Naive thymus-derived CD4-positive, alpha-beta T cell (primary cell): ENCODE measurements at regions of chr4 and their contacts with region 1.

Region 1: DNA sequence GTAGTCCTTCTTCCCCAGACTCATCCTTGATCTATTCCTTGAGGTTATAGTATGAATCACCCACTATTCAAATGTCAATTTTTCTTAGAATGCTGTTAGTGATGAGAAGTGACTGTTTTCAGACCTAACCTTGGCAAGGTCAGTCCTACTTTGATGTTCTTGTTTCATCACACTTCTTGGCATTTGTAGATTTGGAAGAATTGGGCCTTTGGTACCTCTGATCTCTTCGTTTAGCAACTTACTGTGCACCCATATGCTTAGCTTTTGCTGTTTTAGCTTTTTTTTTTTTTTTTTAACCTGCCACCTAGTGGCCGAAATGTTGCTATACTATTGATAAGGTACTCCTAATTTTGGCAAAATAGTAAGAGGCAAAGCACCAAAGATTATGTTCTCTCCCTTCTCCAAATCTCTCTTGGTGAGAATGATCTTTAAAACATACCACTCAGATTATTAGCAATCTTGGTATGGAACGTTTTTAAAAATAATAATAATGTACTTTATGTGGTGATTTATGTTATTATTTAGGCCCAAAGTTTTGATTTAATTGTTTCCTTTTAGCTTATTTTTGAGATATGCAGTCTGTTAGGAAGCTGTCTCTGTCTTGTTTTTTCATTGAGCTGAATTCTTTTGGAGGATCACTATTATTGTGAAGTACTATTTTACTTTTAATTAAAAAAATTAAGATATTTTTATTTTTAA is 16.6 kb downstream of the DCK start:
- DNase-seq: peak in 6 of 9 donors; percentile 23 to 54 (median 48)
- ATAC-seq: peak; percentile 83
- H3K4me3 ChIP-seq: no peak overlapping the region
- H3K4me3 Mint-ChIP-seq: peak overlapping the region in 3 of 10 donors; percentile 5 to 44 (median 29)
- H3K27ac ChIP-seq: no peak overlapping the region
- H3K27ac Mint-ChIP-seq: peak overlapping the region in 8 of 9 donors; percentile 26 to 65 (median 48)
- H3K4me1 ChIP-seq: peaks cover 9 to 10% of the 10 kb centered on the region in 2 donors
- H3K4me1 Mint-ChIP-seq: peaks cover 23 to 52% (median 48%) of the 10 kb centered on the region in 7 donors
- H3K27me3 ChIP-seq: no peaks in the 10 kb centered on the region
- H3K27me3 Mint-ChIP-seq: no peaks in the 10 kb centered on the region

Region 2: DNA sequence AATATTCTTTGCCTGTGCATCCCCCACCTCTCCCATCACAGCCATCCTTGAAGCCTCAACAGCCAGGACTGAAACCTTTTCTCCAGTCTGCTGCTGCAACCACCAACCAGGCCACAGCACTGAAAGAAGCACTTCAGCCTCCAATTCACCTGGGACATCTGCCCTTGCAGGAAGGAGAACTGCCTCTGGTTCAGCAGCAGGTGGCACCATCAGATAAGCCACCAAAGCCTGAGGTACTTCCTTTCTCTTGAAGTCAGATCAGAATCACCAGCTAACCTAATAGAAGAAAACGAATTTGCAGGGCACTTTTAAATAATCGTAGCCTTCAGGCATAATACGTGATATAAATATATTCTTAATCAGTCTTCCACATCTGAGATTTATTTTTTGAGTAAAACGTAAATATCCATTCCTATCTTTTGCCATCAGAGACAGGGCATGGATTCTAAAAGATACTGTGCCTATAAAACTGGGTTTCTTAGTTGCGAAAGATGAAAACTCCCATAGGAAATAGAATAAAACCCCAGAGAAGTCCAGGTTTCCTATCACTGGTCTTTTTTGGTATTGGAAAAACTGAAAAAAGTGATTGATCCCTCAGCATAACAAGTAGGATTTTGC is 408.5 kb before region 1 on chr4:
- CTCF ChIA-PET with region 1: no interaction called
- POLR2A ChIA-PET with region 1: no interaction called
- intact Hi-C with region 1: loop called (anchors 1 kb)
- DNase-seq: peak; percentile 29 to 72 (median 61)
- ATAC-seq: peak; percentile 90
- H3K4me3 ChIP-seq: no peak overlapping the region
- H3K4me3 Mint-ChIP-seq: no peak overlapping the region
- H3K27ac ChIP-seq: no peak overlapping the region
- H3K27ac Mint-ChIP-seq: no peak overlapping the region
- H3K4me1 ChIP-seq: no peaks in the 10 kb centered on the region
- H3K4me1 Mint-ChIP-seq: peaks cover 0 to 4% (median 0%) of the 10 kb centered on the region in 7 donors
- H3K27me3 ChIP-seq: no peaks in the 10 kb centered on the region
- H3K27me3 Mint-ChIP-seq: peaks cover 0 to 20% (median 4%) of the 10 kb centered on the region in 5 donors

Region 3: GRCh38 chr4:70629469-70630090 is 380.5 kb before region 1 on chr4:
- CTCF ChIA-PET with region 1: no interaction called
- POLR2A ChIA-PET with region 1: no interaction called
- intact Hi-C with region 1: loop called in 1 of 2 experiments (anchors 10 kb)
- DNase-seq: no peak
- ATAC-seq: no peak
- H3K4me3 ChIP-seq: no peak overlapping the region
- H3K4me3 Mint-ChIP-seq: no peak overlapping the region
- H3K27ac ChIP-seq: no peak overlapping the region
- H3K27ac Mint-ChIP-seq: peak overlapping the region in 2 of 9 donors; percentile 8 to 18
- H3K4me1 ChIP-seq: no peaks in the 10 kb centered on the region
- H3K4me1 Mint-ChIP-seq: peaks cover 0 to 6% (median 0%) of the 10 kb centered on the region in 7 donors
- H3K27me3 ChIP-seq: no peaks in the 10 kb centered on the region
- H3K27me3 Mint-ChIP-seq: peaks cover 7 to 22% (median 16%) of the 10 kb centered on the region in 5 donors

Region 4: GRCh38 chr4:70839589-70840093 is 170.4 kb before region 1 on chr4 and contains the start of gene GRSF1:
- CTCF ChIA-PET with region 1: no interaction called
- POLR2A ChIA-PET with region 1: no interaction called
- intact Hi-C with region 1: loop called (anchors 2 kb)
- DNase-seq: peak; percentile 92 to 96 (median 95)
- ATAC-seq: peak; percentile 96
- H3K4me3 ChIP-seq: peak within 1 kb of the TSS; percentile 83
- H3K4me3 Mint-ChIP-seq: peak within 1 kb of the TSS; percentile 89 to 99 (median 97)
- H3K27ac ChIP-seq: peak within 1 kb of the TSS; percentile 88
- H3K27ac Mint-ChIP-seq: peak within 1 kb of the TSS; percentile 91 to 98 (median 96)
- H3K4me1 ChIP-seq: peaks cover 17 to 22% of the 10 kb centered on the region in 2 donors
- H3K4me1 Mint-ChIP-seq: peaks cover 8 to 40% (median 29%) of the 10 kb centered on the region in 7 donors
- H3K27me3 ChIP-seq: no peaks in the 10 kb centered on the region
- H3K27me3 Mint-ChIP-seq: no peaks in the 10 kb centered on the region
- total RNA-seq, gene GRSF1: 35.9 to 76.0 (median 48.0) TPM

Region 5: DNA sequence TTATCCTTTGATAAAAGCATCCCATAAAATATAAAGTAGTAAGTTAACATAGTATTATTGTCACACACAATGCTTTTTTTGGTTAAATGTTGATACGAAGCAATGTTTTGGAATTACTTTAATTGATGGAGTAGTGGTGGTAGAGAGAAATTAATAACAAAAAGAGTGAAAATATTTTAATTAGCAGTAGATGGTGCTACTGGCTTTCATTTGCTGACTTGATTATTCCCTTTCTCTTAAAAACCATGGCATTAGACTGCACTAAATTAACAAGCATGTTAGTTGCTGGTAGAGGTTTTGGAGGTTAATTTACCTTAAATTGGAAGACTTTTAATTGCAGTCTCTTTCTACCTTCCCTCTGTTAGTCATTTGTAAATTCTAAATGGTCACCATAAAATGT is 25.4 kb before region 1 on chr4:
- CTCF ChIA-PET with region 1: interaction called, 22 read pairs
- POLR2A ChIA-PET with region 1: interaction called, 3 read pairs
- intact Hi-C with region 1: loop called in 1 of 2 experiments (anchors 1 kb)
- DNase-seq: peak in 1 of 9 donors; percentile 38
- ATAC-seq: peak; percentile 49
- H3K4me3 ChIP-seq: no peak overlapping the region
- H3K4me3 Mint-ChIP-seq: no peak overlapping the region
- H3K27ac ChIP-seq: no peak overlapping the region
- H3K27ac Mint-ChIP-seq: no peak overlapping the region
- H3K4me1 ChIP-seq: no peaks in the 10 kb centered on the region
- H3K4me1 Mint-ChIP-seq: no peaks in the 10 kb centered on the region
- H3K27me3 ChIP-seq: no peaks in the 10 kb centered on the region
- H3K27me3 Mint-ChIP-seq: no peaks in the 10 kb centered on the region

Region 6: DNA sequence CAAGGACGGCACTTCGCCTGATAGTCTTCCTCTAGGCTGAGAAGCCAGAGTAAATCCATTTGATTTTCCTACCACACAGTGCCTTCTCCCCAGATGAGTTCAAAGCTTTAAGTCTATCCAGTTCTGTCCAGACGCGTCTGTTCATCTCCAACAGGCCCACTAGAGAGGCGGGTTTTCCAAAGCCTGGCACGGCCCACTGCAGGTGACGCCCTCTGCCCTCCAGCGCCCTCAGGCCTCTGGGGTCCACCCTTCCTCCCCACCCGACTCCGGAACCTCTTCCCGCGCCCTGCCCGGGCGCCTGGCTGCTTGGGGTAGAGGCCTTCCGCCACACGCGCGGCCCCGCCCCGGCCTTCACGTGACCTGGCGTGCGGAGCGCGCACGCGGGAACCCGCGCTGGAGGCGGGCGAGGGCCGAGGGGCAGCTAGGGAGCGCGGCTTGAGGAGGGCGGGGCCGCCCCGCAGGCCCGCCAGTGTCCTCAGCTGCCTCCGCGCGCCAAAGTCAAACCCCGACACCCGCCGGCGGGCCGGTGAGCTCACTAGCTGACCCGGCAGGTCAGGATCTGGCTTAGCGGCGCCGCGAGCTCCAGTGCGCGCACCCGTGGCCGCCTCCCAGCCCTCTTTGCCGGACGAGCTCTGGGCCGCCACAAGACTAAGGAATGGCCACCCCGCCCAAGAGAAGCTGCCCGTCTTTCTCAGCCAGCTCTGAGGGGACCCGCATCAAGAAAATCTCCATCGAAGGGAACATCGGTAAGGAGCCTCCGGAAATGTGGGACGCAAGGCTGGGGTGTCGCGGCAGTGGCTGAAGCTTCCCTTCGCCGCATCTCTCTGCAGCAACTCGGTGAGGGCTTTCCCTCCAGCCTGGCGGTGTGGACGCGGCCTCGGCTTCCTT is 16.6 kb before region 1 on chr4 and contains the start of gene DCK:
- CTCF ChIA-PET with region 1: interaction called, 16 read pairs
- POLR2A ChIA-PET with region 1: interaction called, 8 read pairs
- intact Hi-C with region 1: loop called (anchors 1 kb)
- DNase-seq: peak; percentile 77 to 93 (median 80)
- ATAC-seq: peak; percentile 96
- H3K4me3 ChIP-seq: peak within 1 kb of the TSS; percentile 86
- H3K4me3 Mint-ChIP-seq: peak within 1 kb of the TSS; percentile 86 to 98 (median 94)
- H3K27ac ChIP-seq: peak within 1 kb of the TSS; percentile 79
- H3K27ac Mint-ChIP-seq: peak within 1 kb of the TSS; percentile 84 to 97 (median 94)
- H3K4me1 ChIP-seq: peaks cover 19 to 26% of the 10 kb centered on the region in 2 donors
- H3K4me1 Mint-ChIP-seq: peaks cover 31 to 56% (median 45%) of the 10 kb centered on the region in 7 donors
- H3K27me3 ChIP-seq: no peaks in the 10 kb centered on the region
- H3K27me3 Mint-ChIP-seq: no peaks in the 10 kb centered on the region
- total RNA-seq, gene DCK: 19.8 to 72.8 (median 47.7) TPM